B cell (primary cell): ENCODE measurements at regions of chr5 and their contacts with region 1.

Region 1: GRCh38 chr5:143002459-143003328 is 232.5 kb downstream of the ARHGAP26 start:
- DNase-seq: peak; percentile 76
- ATAC-seq: peak; percentile 72
- H3K4me3 ChIP-seq: peak overlapping the region in 1 of 5 experiments; percentile 40
- H3K4me3 Mint-ChIP-seq: peak overlapping the region; percentile 54
- H3K27ac ChIP-seq: peak overlapping the region; percentile 81 to 94
- H3K27ac Mint-ChIP-seq: peak overlapping the region; percentile 92
- H3K4me1 ChIP-seq: peaks cover 59 to 62% of the 10 kb centered on the region in 2 donors
- H3K4me1 Mint-ChIP-seq: peaks cover 86% of the 10 kb centered on the region
- H3K27me3 ChIP-seq: no peaks in the 10 kb centered on the region
- H3K27me3 Mint-ChIP-seq: no peaks in the 10 kb centered on the region
- CTCF ChIP-seq: peak; percentile 74

Region 2: GRCh38 chr5:143222287-143223231 is 219.9 kb after region 1 on chr5:
- CTCF ChIA-PET with region 1: interaction called, 3 read pairs
- POLR2A ChIA-PET with region 1: no interaction called
- intact Hi-C with region 1: loop called (anchors 5 kb)
- DNase-seq: peak; percentile 79
- ATAC-seq: peak; percentile 89
- H3K4me3 ChIP-seq: peak overlapping the region in 4 of 5 experiments; percentile 9 to 52 (median 32)
- H3K4me3 Mint-ChIP-seq: peak overlapping the region; percentile 80
- H3K27ac ChIP-seq: peak overlapping the region; percentile 61 to 81
- H3K27ac Mint-ChIP-seq: peak overlapping the region; percentile 82
- H3K4me1 ChIP-seq: peaks cover 30 to 34% of the 10 kb centered on the region in 2 donors
- H3K4me1 Mint-ChIP-seq: peaks cover 39% of the 10 kb centered on the region
- H3K27me3 ChIP-seq: no peaks in the 10 kb centered on the region
- H3K27me3 Mint-ChIP-seq: no peaks in the 10 kb centered on the region
- CTCF ChIP-seq: no peak

Region 3: GRCh38 chr5:143435210-143435657 is 432.5 kb after region 1 on chr5:
- CTCF ChIA-PET with region 1: interaction called, 3 read pairs
- POLR2A ChIA-PET with region 1: no interaction called
- intact Hi-C with region 1: loop called (anchors 1 kb)
- DNase-seq: peak; percentile 88
- ATAC-seq: peak; percentile 85
- H3K4me3 ChIP-seq: peak overlapping the region; percentile 42 to 81 (median 68)
- H3K4me3 Mint-ChIP-seq: peak overlapping the region; percentile 94
- H3K27ac ChIP-seq: peak overlapping the region; percentile 90 to 93
- H3K27ac Mint-ChIP-seq: peak overlapping the region; percentile 97
- H3K4me1 ChIP-seq: peaks cover 28 to 31% of the 10 kb centered on the region in 2 donors
- H3K4me1 Mint-ChIP-seq: peaks cover 65% of the 10 kb centered on the region
- H3K27me3 ChIP-seq: no peaks in the 10 kb centered on the region
- H3K27me3 Mint-ChIP-seq: no peaks in the 10 kb centered on the region
- CTCF ChIP-seq: no peak

Region 4: DNA sequence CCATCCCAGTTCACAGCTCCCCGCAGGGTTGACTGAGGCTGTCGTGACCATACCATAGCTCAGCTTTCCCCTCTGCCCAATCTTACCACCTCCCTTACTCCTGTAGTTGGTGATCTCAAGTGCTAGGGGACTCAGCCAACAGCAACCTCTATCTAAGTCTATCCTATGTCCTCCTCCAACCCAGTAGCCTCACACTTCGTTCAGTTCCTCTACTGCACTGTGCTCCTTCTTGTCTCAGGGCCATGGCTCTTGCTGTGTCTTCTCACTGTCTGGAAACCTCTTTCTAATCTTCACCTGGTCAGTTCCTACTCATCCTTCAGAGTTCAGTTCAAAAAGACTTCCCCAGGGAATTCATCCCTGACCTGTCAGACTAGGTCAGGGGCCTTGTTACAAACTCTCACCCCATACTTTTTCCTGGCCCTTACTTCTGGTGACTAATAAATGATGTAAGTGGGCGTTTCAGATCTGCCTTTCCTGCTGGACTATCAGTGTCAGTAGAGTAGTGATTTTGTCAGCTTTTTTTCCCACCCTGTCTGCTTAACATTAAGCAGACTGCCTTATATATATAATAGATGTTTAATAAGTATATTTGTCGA is 454.4 kb after region 1 on chr5:
- CTCF ChIA-PET with region 1: no interaction called
- POLR2A ChIA-PET with region 1: interaction called, 13 read pairs
- intact Hi-C with region 1: no loop called
- DNase-seq: no peak
- ATAC-seq: no peak
- H3K4me3 ChIP-seq: no peak overlapping the region
- H3K4me3 Mint-ChIP-seq: no peak overlapping the region
- H3K27ac ChIP-seq: no peak overlapping the region
- H3K27ac Mint-ChIP-seq: no peak overlapping the region
- H3K4me1 ChIP-seq: peaks cover 3 to 8% of the 10 kb centered on the region in 2 donors
- H3K4me1 Mint-ChIP-seq: peaks cover 5% of the 10 kb centered on the region
- H3K27me3 ChIP-seq: no peaks in the 10 kb centered on the region
- H3K27me3 Mint-ChIP-seq: no peaks in the 10 kb centered on the region
- CTCF ChIP-seq: no peak

Region 5: GRCh38 chr5:143582869-143583268 is 580.2 kb after region 1 on chr5:
- CTCF ChIA-PET with region 1: no interaction called
- POLR2A ChIA-PET with region 1: no interaction called
- intact Hi-C with region 1: loop called (anchors 10 kb)
- DNase-seq: peak; percentile 33
- ATAC-seq: peak; percentile 57
- H3K4me3 ChIP-seq: peak overlapping the region in 1 of 5 experiments; percentile 26
- H3K4me3 Mint-ChIP-seq: peak overlapping the region; percentile 5
- H3K27ac ChIP-seq: no peak overlapping the region
- H3K27ac Mint-ChIP-seq: peak overlapping the region; percentile 16
- H3K4me1 ChIP-seq: peaks cover 13 to 14% of the 10 kb centered on the region in 2 donors
- H3K4me1 Mint-ChIP-seq: peaks cover 18% of the 10 kb centered on the region
- H3K27me3 ChIP-seq: no peaks in the 10 kb centered on the region
- H3K27me3 Mint-ChIP-seq: no peaks in the 10 kb centered on the region
- CTCF ChIP-seq: no peak

Region 6: GRCh38 chr5:144191998-144192397 is 1189.3 kb after region 1 on chr5:
- CTCF ChIA-PET with region 1: interaction called, 4 read pairs
- POLR2A ChIA-PET with region 1: no interaction called
- intact Hi-C with region 1: loop called (anchors 5 kb)
- DNase-seq: peak; percentile 86
- ATAC-seq: peak; percentile 76
- H3K4me3 ChIP-seq: peak overlapping the region in 2 of 5 experiments; percentile 8 to 19
- H3K4me3 Mint-ChIP-seq: no peak overlapping the region
- H3K27ac ChIP-seq: peak overlapping the region; percentile 54 to 70
- H3K27ac Mint-ChIP-seq: no peak overlapping the region
- H3K4me1 ChIP-seq: peaks cover 46% of the 10 kb centered on the region in 2 donors
- H3K4me1 Mint-ChIP-seq: peaks cover 40% of the 10 kb centered on the region
- H3K27me3 ChIP-seq: no peaks in the 10 kb centered on the region
- H3K27me3 Mint-ChIP-seq: no peaks in the 10 kb centered on the region
- CTCF ChIP-seq: peak; percentile 84